Activated naive CD4-positive, alpha-beta T cell treated with anti-CD3 and anti-CD28 coated beads for 36 hours (primary cell): ENCODE measurements at regions of chr12 and their contacts with region 1.

Region 1: GRCh38 chr12:81809829-81810595 is 50.9 kb upstream of the PPFIA2 start:
- DNase-seq: no peak
- H3K4me3 Mint-ChIP-seq: no peak overlapping the region
- H3K27ac Mint-ChIP-seq: no peak overlapping the region
- H3K4me1 Mint-ChIP-seq: peaks cover 19% of the 10 kb centered on the region
- H3K27me3 Mint-ChIP-seq: peaks cover 25% of the 10 kb centered on the region

Region 2: DNA sequence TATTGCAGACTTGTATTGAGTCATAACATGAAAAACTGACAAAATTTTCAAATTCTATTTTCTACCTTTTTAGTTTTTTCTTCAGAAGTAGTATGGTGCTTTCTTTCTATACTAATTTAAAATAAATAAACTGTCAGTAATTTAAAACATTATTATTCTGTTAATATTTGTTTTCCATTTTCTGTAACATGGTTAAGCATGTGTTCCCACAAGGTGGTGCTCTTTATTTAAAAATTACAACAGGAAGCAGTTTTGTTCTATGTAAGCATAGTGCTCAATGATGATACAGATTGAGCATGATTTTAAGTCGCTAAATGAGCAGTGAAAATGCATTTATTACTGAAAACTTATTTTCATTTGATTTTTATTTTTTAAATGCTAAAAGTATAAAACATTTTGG is 165.5 kb before region 1 on chr12:
- CTCF ChIA-PET with region 1: no interaction called
- intact Hi-C with region 1: no loop called
- DNase-seq: no peak
- H3K4me3 Mint-ChIP-seq: no peak overlapping the region
- H3K27ac Mint-ChIP-seq: no peak overlapping the region
- H3K4me1 Mint-ChIP-seq: no peaks in the 10 kb centered on the region
- H3K27me3 Mint-ChIP-seq: peaks cover 11% of the 10 kb centered on the region

Region 3: DNA sequence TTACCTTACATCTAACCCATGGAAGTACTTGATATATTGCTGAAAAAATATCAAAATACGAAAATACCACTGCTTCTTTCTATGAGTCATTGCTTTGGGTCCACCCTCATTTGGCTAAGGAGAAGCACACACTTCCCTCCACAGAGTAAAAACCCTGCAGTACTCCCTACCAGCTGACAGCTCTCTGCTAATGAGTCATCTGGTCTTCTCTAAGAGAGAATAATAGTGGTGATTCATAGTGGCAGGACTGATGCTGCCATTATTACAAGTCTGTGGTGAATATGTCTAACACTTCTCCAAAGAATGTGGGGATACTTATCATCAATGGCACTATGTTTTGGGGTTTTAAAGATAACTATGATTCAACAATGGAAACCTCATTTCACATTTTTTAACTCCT is 141.5 kb before region 1 on chr12:
- CTCF ChIA-PET with region 1: no interaction called
- intact Hi-C with region 1: loop called (anchors 1 kb)
- DNase-seq: peak; percentile 34
- H3K4me3 Mint-ChIP-seq: no peak overlapping the region
- H3K27ac Mint-ChIP-seq: no peak overlapping the region
- H3K4me1 Mint-ChIP-seq: peaks cover 7% of the 10 kb centered on the region
- H3K27me3 Mint-ChIP-seq: peaks cover 8% of the 10 kb centered on the region

Region 4: DNA sequence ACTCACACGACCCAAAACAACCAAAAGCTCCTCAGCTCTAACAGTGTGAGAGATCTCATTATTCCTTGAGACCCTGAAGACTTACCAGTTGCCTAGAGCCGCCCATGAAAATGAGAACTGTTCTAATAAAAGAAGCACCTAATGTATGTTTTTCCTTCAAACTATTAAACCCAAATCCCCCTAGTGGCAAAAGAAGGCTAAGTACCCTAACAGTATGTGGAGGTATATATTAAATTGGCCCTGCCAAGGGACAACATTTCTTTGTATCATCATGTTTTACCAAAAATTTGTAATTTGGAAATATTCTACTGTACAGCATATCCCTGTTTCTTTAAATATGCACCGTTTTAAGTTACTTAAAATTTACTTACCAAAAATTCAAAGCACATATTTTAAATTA is 12.9 kb before region 1 on chr12:
- CTCF ChIA-PET with region 1: interaction called, 3 read pairs
- intact Hi-C with region 1: loop called (anchors 1 kb)
- DNase-seq: no peak
- H3K4me3 Mint-ChIP-seq: no peak overlapping the region
- H3K27ac Mint-ChIP-seq: no peak overlapping the region
- H3K4me1 Mint-ChIP-seq: peaks cover 15% of the 10 kb centered on the region
- H3K27me3 Mint-ChIP-seq: peaks cover 15% of the 10 kb centered on the region

Region 5: DNA sequence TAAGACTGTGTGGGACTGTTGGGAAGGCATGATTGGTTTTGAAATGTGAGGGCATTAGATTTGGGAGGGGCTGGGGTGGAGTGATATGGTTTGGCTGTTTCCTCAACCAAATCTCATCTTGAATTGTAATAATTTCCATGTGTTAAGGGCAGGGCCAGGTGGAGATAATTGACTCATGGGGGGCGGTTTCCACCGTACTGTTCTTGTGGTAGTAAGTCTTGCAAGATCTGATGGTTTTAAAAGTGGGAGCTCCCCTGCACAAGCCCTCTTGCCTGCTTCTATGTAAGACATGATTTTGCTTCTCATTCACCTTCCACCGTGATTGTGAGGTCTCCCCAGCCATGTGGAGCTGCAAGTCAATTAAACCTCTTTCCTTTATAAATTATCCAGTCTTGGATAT is 25.8 kb after region 1 on chr12:
- CTCF ChIA-PET with region 1: no interaction called
- intact Hi-C with region 1: no loop called
- DNase-seq: peak; percentile 55
- H3K4me3 Mint-ChIP-seq: no peak overlapping the region
- H3K27ac Mint-ChIP-seq: peak overlapping the region; percentile 44
- H3K4me1 Mint-ChIP-seq: peaks cover 7% of the 10 kb centered on the region
- H3K27me3 Mint-ChIP-seq: no peaks in the 10 kb centered on the region

Region 6: GRCh38 chr12:81942594-81942993 is 132.6 kb after region 1 on chr12:
- CTCF ChIA-PET with region 1: no interaction called
- intact Hi-C with region 1: loop called (anchors 1 kb)
- DNase-seq: peak; percentile 6
- H3K4me3 Mint-ChIP-seq: no peak overlapping the region
- H3K27ac Mint-ChIP-seq: no peak overlapping the region
- H3K4me1 Mint-ChIP-seq: peaks cover 37% of the 10 kb centered on the region
- H3K27me3 Mint-ChIP-seq: no peaks in the 10 kb centered on the region